ENCODE measurements at regions of chr2 and their contacts with region 1.

Region 1: GRCh38 chr2:192162392-192163042 is 32.2 kb downstream of the TMEFF2 start:
- DNase-seq: peak; percentile 61
- ATAC-seq: peak; percentile 75
- H3K4me3 Mint-ChIP-seq: no peak overlapping the region
- H3K27ac Mint-ChIP-seq: no peak overlapping the region
- H3K4me1 Mint-ChIP-seq: peaks cover 18% of the 10 kb centered on the region
- H3K27me3 Mint-ChIP-seq: no peaks in the 10 kb centered on the region
- CTCF ChIP-seq: peak; percentile 77

Region 2: DNA sequence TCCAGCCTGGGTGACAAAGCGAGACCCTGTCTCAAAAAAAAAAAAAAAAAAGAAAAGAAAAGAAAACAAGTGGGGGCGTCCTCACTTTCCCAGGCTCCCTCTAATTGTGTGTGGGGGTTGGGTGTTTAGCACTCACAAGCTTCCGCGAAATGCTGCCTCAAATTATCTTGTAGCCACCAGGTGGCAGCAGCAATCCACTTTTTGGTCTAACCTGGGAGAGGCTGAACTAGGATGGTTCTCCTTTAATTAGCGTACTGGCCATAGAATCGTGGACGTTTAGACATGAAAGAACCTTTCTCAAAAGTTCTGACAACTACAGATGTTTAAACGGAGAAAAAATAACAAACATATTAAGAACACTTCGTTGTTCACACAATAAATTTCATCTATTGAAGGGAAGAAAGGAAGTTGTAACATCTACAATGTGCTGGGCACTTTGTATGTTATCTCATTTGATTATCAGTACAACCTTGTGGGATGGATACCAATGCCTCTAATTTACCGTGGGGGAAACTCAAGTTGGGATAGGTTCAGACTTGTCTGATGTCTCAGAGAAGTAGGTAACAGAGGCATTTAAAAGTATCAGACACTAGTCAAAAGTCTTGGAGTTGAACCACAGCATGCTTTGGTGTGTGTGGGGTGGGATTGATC is 607.3 kb before region 1 on chr2:
- CTCF ChIA-PET with region 1: interaction called, 11 read pairs
- POLR2A ChIA-PET with region 1: no interaction called
- DNase-seq: peak; percentile 88
- ATAC-seq: peak; percentile 95
- H3K4me3 Mint-ChIP-seq: no peak overlapping the region
- H3K27ac Mint-ChIP-seq: no peak overlapping the region
- H3K4me1 Mint-ChIP-seq: peaks cover 19% of the 10 kb centered on the region
- H3K27me3 Mint-ChIP-seq: peaks cover 6% of the 10 kb centered on the region
- CTCF ChIP-seq: peak; percentile 38; the same call in 1 of the 2 replicates

Region 3: GRCh38 chr2:191811807-191812602 is 350.5 kb before region 1 on chr2:
- CTCF ChIA-PET with region 1: interaction called, 99 read pairs
- POLR2A ChIA-PET with region 1: interaction called, 3 read pairs
- DNase-seq: peak; percentile 59
- ATAC-seq: peak; percentile 84
- H3K4me3 Mint-ChIP-seq: no peak overlapping the region
- H3K27ac Mint-ChIP-seq: no peak overlapping the region
- H3K4me1 Mint-ChIP-seq: 0 out of 2 replicates have a peak, but pooled peaks cover 2% of the 10 kb centered on the region
- H3K27me3 Mint-ChIP-seq: no peaks in the 10 kb centered on the region; the same call in 1 of the 2 replicates
- CTCF ChIP-seq: peak; percentile 36

Region 4: DNA sequence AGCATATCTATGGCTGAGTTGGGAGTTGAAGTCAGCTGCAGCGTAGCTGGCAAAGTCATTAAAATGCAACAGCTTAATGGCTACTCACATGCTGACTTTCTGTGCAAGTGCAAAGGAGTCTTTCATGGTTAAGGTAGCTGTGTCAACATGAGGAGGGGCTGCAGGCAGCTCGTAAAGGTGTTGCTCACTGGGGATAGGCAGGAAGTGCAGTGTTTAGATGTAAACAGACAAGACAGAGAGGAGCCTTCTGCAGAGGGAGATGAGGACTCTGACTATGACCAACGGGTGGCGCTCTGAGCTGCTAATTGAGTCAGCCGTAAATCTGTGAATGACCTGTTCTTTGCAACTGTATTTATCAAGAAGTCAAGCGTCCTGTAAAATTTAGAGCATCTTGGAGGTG is 293.3 kb before region 1 on chr2:
- CTCF ChIA-PET with region 1: interaction called, 142 read pairs
- POLR2A ChIA-PET with region 1: interaction called, 3 read pairs
- DNase-seq: peak; percentile 82
- ATAC-seq: peak; percentile 99
- H3K4me3 Mint-ChIP-seq: no peak overlapping the region
- H3K27ac Mint-ChIP-seq: peak overlapping the region; percentile 48; the same call in 1 of the 2 replicates
- H3K4me1 Mint-ChIP-seq: peaks cover 31% of the 10 kb centered on the region
- H3K27me3 Mint-ChIP-seq: peaks cover 3% of the 10 kb centered on the region; the same call in 1 of the 2 replicates
- CTCF ChIP-seq: peak; percentile 56

Region 5: DNA sequence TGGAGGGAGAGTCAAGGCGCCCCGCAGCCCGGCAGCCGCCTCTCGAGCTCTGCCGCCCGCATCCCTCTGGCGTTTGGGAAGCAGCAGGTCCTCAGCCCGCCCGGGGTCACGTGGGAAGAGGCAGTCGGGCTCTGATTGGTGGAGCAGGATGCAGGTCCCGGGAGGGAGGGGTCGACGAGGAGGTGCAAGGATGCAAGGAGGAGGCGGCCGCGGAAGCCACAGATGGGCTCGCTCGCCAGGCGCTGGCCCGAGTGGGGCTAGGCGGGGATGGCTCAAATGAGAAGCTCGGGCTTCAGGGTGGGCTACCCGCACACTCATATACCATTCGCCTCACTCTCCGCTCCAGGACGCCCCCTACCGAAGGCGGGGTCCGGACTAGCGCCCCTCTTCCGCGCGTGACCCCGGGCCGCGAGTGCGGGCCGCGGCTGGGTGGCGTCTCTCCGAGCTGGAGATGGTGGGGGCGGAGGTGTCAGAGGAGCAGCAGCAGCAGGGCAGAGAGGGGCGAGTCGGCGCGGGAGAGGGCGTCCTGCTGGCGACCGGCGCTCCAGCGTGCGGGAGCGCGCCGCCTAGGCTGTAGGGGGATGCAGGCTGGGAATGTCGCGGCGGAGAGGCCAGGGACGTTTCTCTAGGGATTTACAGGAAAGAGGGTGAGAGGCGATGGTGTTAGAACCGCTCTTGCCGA is 32.5 kb after region 1 on chr2 and contains the start of gene TMEFF2:
- CTCF ChIA-PET with region 1: interaction called, 17 read pairs
- POLR2A ChIA-PET with region 1: no interaction called
- DNase-seq: peak; percentile 92
- ATAC-seq: peak; percentile 84
- H3K4me3 Mint-ChIP-seq: peak within 1 kb of the TSS; percentile 85
- H3K27ac Mint-ChIP-seq: no peak within 1 kb of the TSS
- H3K4me1 Mint-ChIP-seq: peaks cover 26% of the 10 kb centered on the region
- H3K27me3 Mint-ChIP-seq: peaks cover 72% of the 10 kb centered on the region
- CTCF ChIP-seq: peak; percentile 38; the same call in 1 of the 2 replicates
- total RNA-seq, gene TMEFF2: 0.87 to 2.4 TPM (median 2.3 TPM) in 3 replicates

Region 6: DNA sequence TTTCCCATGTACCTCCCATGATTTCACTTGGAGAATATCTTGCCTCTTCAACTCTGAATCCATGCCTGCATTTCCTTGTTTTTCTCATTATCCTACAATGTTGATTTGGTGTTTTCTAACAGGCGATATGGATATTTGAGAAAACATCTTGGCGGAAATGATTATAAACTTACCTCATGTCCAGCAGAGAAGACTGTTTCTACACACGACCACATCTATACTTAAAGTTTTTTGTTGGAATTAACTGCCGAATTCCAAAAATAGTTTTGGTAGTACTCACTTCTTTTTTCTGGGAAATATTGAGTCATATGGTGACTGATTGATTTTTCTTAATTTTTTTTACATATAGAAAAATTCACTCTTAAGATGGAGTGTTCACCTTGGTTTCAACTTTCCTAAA is 73.6 kb after region 1 on chr2:
- CTCF ChIA-PET with region 1: no interaction called
- POLR2A ChIA-PET with region 1: no interaction called
- DNase-seq: no peak
- ATAC-seq: no peak
- H3K4me3 Mint-ChIP-seq: no peak overlapping the region
- H3K27ac Mint-ChIP-seq: no peak overlapping the region
- H3K4me1 Mint-ChIP-seq: no peaks in the 10 kb centered on the region
- H3K27me3 Mint-ChIP-seq: no peaks in the 10 kb centered on the region
- CTCF ChIP-seq: no peak

Measured in WTC11 (cell line).